CD4-positive, alpha-beta T cell (primary cell): ENCODE measurements at regions of chr7 and their contacts with region 1.

Region 1: GRCh38 chr7:98106647-98107445 is at the start of gene LMTK2:
- DNase-seq: peak; percentile 90 to 99 (median 96)
- ATAC-seq: peak; percentile 100
- H3K4me3 ChIP-seq: peak within 1 kb of the TSS; percentile 68
- H3K4me3 Mint-ChIP-seq: peak within 1 kb of the TSS; percentile 100
- H3K27ac ChIP-seq: peak within 1 kb of the TSS; percentile 37 to 68
- H3K27ac Mint-ChIP-seq: peak within 1 kb of the TSS; percentile 88
- H3K4me1 ChIP-seq: peaks cover 22% of the 10 kb centered on the region
- H3K4me1 Mint-ChIP-seq: peaks cover 53% of the 10 kb centered on the region
- H3K27me3 ChIP-seq: peaks cover 3 to 15% of the 10 kb centered on the region in 2 experiments
- H3K27me3 Mint-ChIP-seq: peaks cover 14% of the 10 kb centered on the region
- CTCF ChIP-seq: peak; percentile 98
- total RNA-seq, gene LMTK2: 30.3 to 31.7 TPM

Region 2: GRCh38 chr7:97117372-97118188 is 989.3 kb before region 1 on chr7 and contains the start of gene SDHAF3:
- CTCF ChIA-PET with region 1: no interaction called
- POLR2A ChIA-PET with region 1: no interaction called
- intact Hi-C with region 1: loop called in 1 of 2 experiments (anchors 5 kb)
- DNase-seq: peak; percentile 96 to 99 (median 98)
- ATAC-seq: peak; percentile 93
- H3K4me3 ChIP-seq: peak within 1 kb of the TSS; percentile 82
- H3K4me3 Mint-ChIP-seq: peak within 1 kb of the TSS; percentile 97
- H3K27ac ChIP-seq: peak within 1 kb of the TSS; percentile 57 to 71
- H3K27ac Mint-ChIP-seq: peak within 1 kb of the TSS; percentile 89
- H3K4me1 ChIP-seq: peaks cover 10% of the 10 kb centered on the region
- H3K4me1 Mint-ChIP-seq: peaks cover 57% of the 10 kb centered on the region
- H3K27me3 ChIP-seq: no peaks in the 10 kb centered on the region
- H3K27me3 Mint-ChIP-seq: no peaks in the 10 kb centered on the region
- CTCF ChIP-seq: no peak
- total RNA-seq, gene SDHAF3: 3.2 to 5.0 TPM

Region 3: GRCh38 chr7:98133181-98133580 is 26.3 kb after region 1 on chr7:
- CTCF ChIA-PET with region 1: interaction called, 4 read pairs
- POLR2A ChIA-PET with region 1: interaction called, 3 read pairs
- intact Hi-C with region 1: loop called in 1 of 2 experiments (anchors 1 kb)
- DNase-seq: peak in 4 of 14 experiments; percentile 12 to 72 (median 57)
- ATAC-seq: peak; percentile 52
- H3K4me3 ChIP-seq: no peak overlapping the region
- H3K4me3 Mint-ChIP-seq: peak overlapping the region; percentile 26
- H3K27ac ChIP-seq: no peak overlapping the region
- H3K27ac Mint-ChIP-seq: no peak overlapping the region
- H3K4me1 ChIP-seq: peaks cover 31% of the 10 kb centered on the region
- H3K4me1 Mint-ChIP-seq: peaks cover 57% of the 10 kb centered on the region
- H3K27me3 ChIP-seq: no peaks in the 10 kb centered on the region
- H3K27me3 Mint-ChIP-seq: no peaks in the 10 kb centered on the region
- CTCF ChIP-seq: no peak

Region 4: DNA sequence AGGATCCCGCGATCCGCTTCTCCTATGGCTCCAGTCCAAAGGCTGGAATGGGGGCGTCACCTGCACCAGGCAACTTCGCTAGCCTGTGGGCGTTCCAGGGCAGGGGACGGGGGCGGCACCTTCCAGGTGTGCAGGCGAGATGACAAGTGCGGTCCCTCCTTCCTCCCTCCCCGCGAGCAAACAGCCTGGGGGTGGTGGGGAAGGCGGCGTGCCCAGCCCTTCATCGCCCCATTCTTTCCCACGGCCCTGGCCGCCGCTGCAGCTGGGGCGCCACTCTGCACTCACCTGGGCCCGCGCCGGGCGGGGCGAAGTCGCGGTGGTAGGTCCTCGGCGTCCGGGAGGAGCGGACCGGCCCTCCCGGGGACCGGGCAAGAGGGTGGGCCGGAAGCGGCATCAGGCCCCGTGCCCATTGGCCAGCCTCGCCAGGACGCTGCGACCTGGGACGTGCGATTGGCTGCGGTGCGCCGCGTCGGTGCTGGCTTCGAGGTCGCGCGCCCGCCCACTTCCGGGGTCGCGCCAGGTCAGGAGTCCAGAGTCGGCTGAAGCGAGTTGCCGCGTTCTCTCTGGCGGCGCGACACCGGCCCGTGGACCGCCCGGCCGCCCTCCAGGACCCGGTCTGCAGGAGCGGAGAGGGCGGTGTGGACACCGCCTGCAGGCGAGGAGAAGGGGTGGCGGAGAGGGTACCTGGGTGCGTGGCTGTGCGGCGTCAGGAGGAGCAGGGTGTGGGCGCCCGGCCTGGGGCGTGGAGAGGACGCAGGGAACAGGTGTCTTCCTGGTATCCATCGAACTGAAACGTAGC is 145.2 kb after region 1 on chr7 and contains the start of gene TECPR1:
- CTCF ChIA-PET with region 1: no interaction called
- POLR2A ChIA-PET with region 1: interaction called, 3 read pairs
- intact Hi-C with region 1: loop called in 1 of 2 experiments (anchors 5 kb)
- DNase-seq: peak; percentile 68 to 94 (median 81)
- ATAC-seq: peak; percentile 70
- H3K4me3 ChIP-seq: peak within 1 kb of the TSS; percentile 90
- H3K4me3 Mint-ChIP-seq: peak within 1 kb of the TSS; percentile 94
- H3K27ac ChIP-seq: peak within 1 kb of the TSS; percentile 85 to 93
- H3K27ac Mint-ChIP-seq: peak within 1 kb of the TSS; percentile 98
- H3K4me1 ChIP-seq: peaks cover 64% of the 10 kb centered on the region
- H3K4me1 Mint-ChIP-seq: peaks cover 71% of the 10 kb centered on the region
- H3K27me3 ChIP-seq: no peaks in the 10 kb centered on the region
- H3K27me3 Mint-ChIP-seq: no peaks in the 10 kb centered on the region
- CTCF ChIP-seq: no peak
- total RNA-seq, gene TECPR1: 85.9 to 90.4 TPM

Region 5: DNA sequence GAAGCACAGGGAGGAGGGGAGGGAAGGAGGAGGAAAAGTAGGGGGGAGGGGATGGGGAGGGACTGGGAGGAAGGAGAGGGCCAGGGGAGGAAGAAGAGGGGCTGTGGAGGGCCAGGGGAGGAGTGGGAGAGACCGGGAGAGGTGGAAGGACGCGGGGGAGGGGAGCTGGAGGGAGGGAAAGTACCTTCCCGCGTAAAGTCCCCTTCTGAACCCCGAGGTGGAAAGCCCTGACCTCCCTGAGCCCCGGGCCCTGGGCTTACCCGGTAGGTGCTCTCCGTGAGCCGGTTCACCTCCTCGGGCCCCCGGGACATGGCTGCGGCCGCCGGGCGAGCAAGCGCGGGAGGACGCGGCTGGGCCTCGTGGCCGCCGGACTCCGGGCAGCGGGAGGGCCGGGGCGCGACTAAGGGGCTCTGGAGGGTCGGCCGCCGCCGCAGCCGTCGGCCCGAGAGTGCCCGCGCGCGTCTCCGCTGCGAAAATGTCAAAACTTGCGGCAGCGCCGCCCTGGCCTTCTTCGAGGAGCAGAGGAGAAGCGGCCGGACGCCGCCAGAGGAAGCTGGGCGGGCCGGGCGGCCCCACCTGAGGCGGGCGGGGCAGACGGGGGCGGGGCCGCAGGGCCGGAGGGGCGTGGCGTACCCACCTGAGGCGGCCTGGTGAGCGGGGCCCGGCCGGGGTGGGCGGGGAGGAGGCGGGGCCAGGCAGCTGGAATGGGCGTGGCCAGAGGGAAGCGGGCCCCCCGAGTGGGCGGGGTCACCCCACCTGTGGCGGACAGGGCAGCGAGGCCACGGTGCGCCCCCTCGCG is 293.9 kb after region 1 on chr7 and contains the start of gene BAIAP2L1:
- CTCF ChIA-PET with region 1: no interaction called
- POLR2A ChIA-PET with region 1: no interaction called
- intact Hi-C with region 1: loop called in 1 of 2 experiments (anchors 5 kb)
- DNase-seq: peak; percentile 63 to 89 (median 80)
- ATAC-seq: peak; percentile 87
- H3K4me3 ChIP-seq: peak within 1 kb of the TSS; percentile 39
- H3K4me3 Mint-ChIP-seq: peak within 1 kb of the TSS; percentile 72
- H3K27ac ChIP-seq: no peak within 1 kb of the TSS
- H3K27ac Mint-ChIP-seq: no peak within 1 kb of the TSS
- H3K4me1 ChIP-seq: peaks cover 12% of the 10 kb centered on the region
- H3K4me1 Mint-ChIP-seq: peaks cover 7% of the 10 kb centered on the region
- H3K27me3 ChIP-seq: peaks cover 0 to 7% of the 10 kb centered on the region in 2 experiments
- H3K27me3 Mint-ChIP-seq: peaks cover 24% of the 10 kb centered on the region
- CTCF ChIP-seq: no peak
- total RNA-seq, gene BAIAP2L1: 0.33 to 0.61 TPM